ENCODE measurements at regions of chr3 and their contacts with region 1.

Region 1: GRCh38 chr3:15268033-15268631 is 62.1 kb downstream of the CAPN7 start:
- DNase-seq: peak; percentile 94
- H3K4me3 ChIP-seq: no peak overlapping the region
- H3K27ac ChIP-seq: peak overlapping the region; percentile 61 to 74 (median 70)
- H3K4me1 ChIP-seq: peaks cover 18 to 45% (median 35%) of the 10 kb centered on the region in 4 donors
- H3K27me3 ChIP-seq: no peaks in the 10 kb centered on the region
- CTCF ChIP-seq: peak; percentile 89 to 93 (median 91)
- EP300 ChIP-seq: no peak
- POLR2A ChIP-seq: no peak

Region 2: DNA sequence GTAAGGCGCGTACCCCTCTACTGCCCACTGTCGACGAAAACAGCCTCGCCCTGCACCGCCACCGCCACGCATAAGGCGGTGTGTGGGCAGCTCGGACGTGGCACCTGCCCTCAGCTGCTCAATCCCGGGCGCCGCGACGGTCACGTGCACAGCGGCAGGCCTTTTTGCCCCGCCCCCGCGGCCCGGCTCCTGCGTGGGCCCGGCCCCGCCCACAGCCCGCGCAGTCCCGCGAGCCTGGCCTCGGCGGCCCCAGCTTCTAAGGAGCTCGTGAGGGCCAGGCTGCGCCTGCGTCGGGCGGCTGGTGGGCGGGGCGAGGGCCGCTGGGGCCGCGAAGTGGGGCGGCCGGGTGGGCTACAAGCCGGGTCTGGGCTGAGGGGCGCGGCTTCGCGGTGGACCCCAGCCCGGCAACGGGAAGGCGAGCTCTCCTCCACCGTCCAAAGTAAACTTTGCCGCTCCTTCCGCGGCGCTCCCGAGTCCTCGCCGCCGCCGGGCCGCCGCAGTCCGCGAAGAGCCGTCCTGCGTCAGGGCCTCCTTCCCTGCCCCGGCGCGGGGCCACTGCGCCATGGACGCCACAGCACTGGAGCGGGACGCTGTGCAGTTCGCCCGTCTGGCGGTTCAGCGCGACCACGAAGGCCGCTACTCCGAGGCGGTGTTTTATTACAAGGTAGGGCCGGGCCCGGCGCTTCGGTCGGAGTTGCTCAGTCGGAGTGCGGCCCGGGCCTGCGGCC is 62.0 kb before region 1 on chr3 and contains the start of gene CAPN7:
- intact Hi-C with region 1: loop called (anchors 10 kb)
- DNase-seq: peak; percentile 96
- H3K4me3 ChIP-seq: peak within 1 kb of the TSS; percentile 87 to 98 (median 90)
- H3K27ac ChIP-seq: peak within 1 kb of the TSS; percentile 96 to 99 (median 98)
- H3K4me1 ChIP-seq: peaks cover 24 to 52% (median 40%) of the 10 kb centered on the region in 4 donors
- H3K27me3 ChIP-seq: no peaks in the 10 kb centered on the region
- CTCF ChIP-seq: peak; percentile 44 to 60 (median 47)
- EP300 ChIP-seq: no peak
- POLR2A ChIP-seq: peak; percentile 65
- total RNA-seq, gene CAPN7: 33.0 to 52.0 (median 43.3) TPM

Region 3: GRCh38 chr3:15332405-15333098 is 64.4 kb after region 1 on chr3 and contains the start of gene SH3BP5:
- intact Hi-C with region 1: loop called (anchors 5 kb)
- DNase-seq: no peak
- H3K4me3 ChIP-seq: peak within 1 kb of the TSS; percentile 65 to 94 (median 76)
- H3K27ac ChIP-seq: peak within 1 kb of the TSS; percentile 78 to 87 (median 82)
- H3K4me1 ChIP-seq: peaks cover 19 to 49% (median 48%) of the 10 kb centered on the region in 4 donors
- H3K27me3 ChIP-seq: no peaks in the 10 kb centered on the region
- CTCF ChIP-seq: peak; percentile 71 to 91 (median 77)
- EP300 ChIP-seq: no peak
- POLR2A ChIP-seq: peak; percentile 48
- total RNA-seq, gene SH3BP5: 26.2 to 56.5 (median 38.2) TPM

Region 4: GRCh38 chr3:15377961-15378791 is 110.0 kb after region 1 on chr3:
- intact Hi-C with region 1: loop called (anchors 1 kb)
- DNase-seq: peak; percentile 98
- H3K4me3 ChIP-seq: peak overlapping the region in 1 of 4 donors; percentile 11
- H3K27ac ChIP-seq: peak overlapping the region in 2 of 4 donors; percentile 36 to 37
- H3K4me1 ChIP-seq: peaks cover 0 to 5% (median 2%) of the 10 kb centered on the region in 4 donors
- H3K27me3 ChIP-seq: no peaks in the 10 kb centered on the region
- CTCF ChIP-seq: peak; percentile 69 to 87 (median 86)
- EP300 ChIP-seq: no peak
- POLR2A ChIP-seq: no peak

Region 5: GRCh38 chr3:15557511-15557946 is 289.4 kb after region 1 on chr3:
- intact Hi-C with region 1: loop called (anchors 5 kb)
- DNase-seq: peak; percentile 90
- H3K4me3 ChIP-seq: no peak overlapping the region
- H3K27ac ChIP-seq: no peak overlapping the region
- H3K4me1 ChIP-seq: peaks cover 0 to 9% (median 0%) of the 10 kb centered on the region in 4 donors
- H3K27me3 ChIP-seq: no peaks in the 10 kb centered on the region
- CTCF ChIP-seq: peak; percentile 59 to 70 (median 61)
- EP300 ChIP-seq: no peak
- POLR2A ChIP-seq: no peak